ENCODE measurements at regions of chr20 and their contacts with region 1.

Region 1: DNA sequence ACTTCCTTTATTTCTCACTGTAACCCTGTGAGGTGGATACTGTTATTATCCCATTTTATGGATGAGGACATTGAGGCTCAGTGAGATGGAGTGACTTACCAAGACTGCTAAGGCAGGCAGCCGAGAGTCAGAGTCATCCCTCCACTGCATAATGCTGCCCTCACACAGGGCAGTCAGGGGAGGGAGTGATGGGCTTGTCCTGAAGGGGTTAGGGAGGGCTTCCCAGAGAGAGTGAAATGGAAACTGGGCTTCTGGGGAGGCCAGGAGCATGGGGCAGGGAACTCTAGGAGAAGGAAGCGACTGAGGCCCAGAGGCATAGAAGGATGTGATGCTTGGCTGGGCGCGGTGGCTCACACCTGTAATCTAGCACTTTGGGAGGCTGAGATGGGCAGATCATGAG is 31.1 kb downstream of the TM9SF4 start:
- DNase-seq: no peak
- ATAC-seq: no peak
- H3K4me3 ChIP-seq: no peak overlapping the region
- H3K27ac ChIP-seq: no peak overlapping the region
- H3K4me1 ChIP-seq: 0 out of 2 replicates have a peak, but pooled peaks cover 4% of the 10 kb centered on the region
- H3K27me3 ChIP-seq: no peaks in the 10 kb centered on the region
- CTCF ChIP-seq: no peak

Region 2: DNA sequence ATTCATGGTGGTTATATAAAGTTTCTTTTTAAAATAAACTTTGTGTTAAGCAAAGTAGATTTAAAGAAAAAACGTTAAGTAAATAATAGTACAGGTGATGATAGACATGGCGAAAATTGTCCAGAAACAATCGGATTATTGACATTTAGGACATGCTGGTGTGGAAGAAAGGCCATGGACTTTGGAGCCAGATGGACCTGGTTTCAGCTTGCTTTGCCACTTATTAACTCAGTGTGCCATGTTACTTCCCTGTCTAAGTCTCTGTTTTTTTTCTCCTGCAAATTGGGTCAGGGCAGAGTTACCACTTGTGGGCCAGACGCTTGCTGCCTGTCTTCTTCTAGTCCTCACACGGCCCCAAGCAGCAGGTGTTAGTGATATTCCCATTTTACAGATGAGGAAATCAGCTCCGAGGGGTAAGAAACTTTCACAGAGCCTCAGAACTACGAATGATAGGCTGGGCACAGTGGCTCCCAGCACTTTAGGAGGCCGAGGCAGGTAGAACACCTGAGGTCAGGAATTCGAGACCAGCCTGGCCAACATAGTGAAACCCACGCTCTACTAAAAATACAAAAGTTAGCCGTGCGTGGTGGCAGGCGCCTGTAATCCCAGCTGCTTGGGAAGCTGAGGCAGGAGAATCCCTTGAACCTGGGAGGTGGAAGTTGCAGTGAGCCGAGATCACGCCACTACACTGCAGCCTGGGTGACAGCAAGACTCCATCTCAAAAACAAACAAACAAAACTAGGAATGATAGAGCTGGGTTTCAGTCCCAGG is 149.2 kb after region 1 on chr20:
- CTCF ChIA-PET with region 1: no interaction called
- POLR2A ChIA-PET with region 1: interaction called, 13 read pairs
- in situ Hi-C with region 1: no loop called
- intact Hi-C with region 1: no loop called
- DNase-seq: no peak
- ATAC-seq: no peak
- H3K4me3 ChIP-seq: no peak overlapping the region
- H3K27ac ChIP-seq: no peak overlapping the region
- H3K4me1 ChIP-seq: peaks cover 13% of the 10 kb centered on the region
- H3K27me3 ChIP-seq: no peaks in the 10 kb centered on the region
- CTCF ChIP-seq: no peak

Measured in Panc1 (cell line).